ENCODE measurements at regions of chrX and their contacts with region 1.

Region 1: GRCh38 chrX:69222103-69223090 is 57.1 kb upstream of the PJA1 start:
- DNase-seq: peak; percentile 59 to 81 (median 71)
- ATAC-seq: peak; percentile 84
- H3K4me3 ChIP-seq: no peak overlapping the region
- H3K4me3 Mint-ChIP-seq: no peak overlapping the region
- H3K27ac ChIP-seq: no peak overlapping the region
- H3K27ac Mint-ChIP-seq: no peak overlapping the region
- H3K4me1 ChIP-seq: peaks cover 6% of the 10 kb centered on the region
- H3K4me1 Mint-ChIP-seq: no peaks in the 10 kb centered on the region
- H3K27me3 ChIP-seq: no peaks in the 10 kb centered on the region
- H3K27me3 Mint-ChIP-seq: no peaks in the 10 kb centered on the region
- CTCF ChIP-seq: peak; percentile 65

Region 2: GRCh38 chrX:68511255-68511654 is 711.1 kb before region 1 on chrX:
- CTCF ChIA-PET with region 1: no interaction called
- POLR2A ChIA-PET with region 1: no interaction called
- intact Hi-C with region 1: loop called in 1 of 2 experiments (anchors 5 kb)
- DNase-seq: peak in 6 of 14 experiments; percentile 5 to 62 (median 44)
- ATAC-seq: peak; percentile 38
- H3K4me3 ChIP-seq: no peak overlapping the region
- H3K4me3 Mint-ChIP-seq: no peak overlapping the region
- H3K27ac ChIP-seq: no peak overlapping the region
- H3K27ac Mint-ChIP-seq: peak overlapping the region; percentile 4
- H3K4me1 ChIP-seq: peaks cover 9% of the 10 kb centered on the region
- H3K4me1 Mint-ChIP-seq: peaks cover 29% of the 10 kb centered on the region
- H3K27me3 ChIP-seq: no peaks in the 10 kb centered on the region
- H3K27me3 Mint-ChIP-seq: no peaks in the 10 kb centered on the region
- CTCF ChIP-seq: peak; percentile 71

Region 3: GRCh38 chrX:68822641-68823410 is 399.6 kb before region 1 on chrX:
- CTCF ChIA-PET with region 1: interaction called, 12 read pairs
- POLR2A ChIA-PET with region 1: interaction called, 14 read pairs
- intact Hi-C with region 1: loop called (anchors 1 kb)
- DNase-seq: peak in 3 of 14 experiments; percentile 24 to 45 (median 40)
- ATAC-seq: peak; percentile 58
- H3K4me3 ChIP-seq: no peak overlapping the region
- H3K4me3 Mint-ChIP-seq: no peak overlapping the region
- H3K27ac ChIP-seq: no peak overlapping the region
- H3K27ac Mint-ChIP-seq: no peak overlapping the region
- H3K4me1 ChIP-seq: peaks cover under 1% of the 10 kb centered on the region
- H3K4me1 Mint-ChIP-seq: peaks cover 2% of the 10 kb centered on the region
- H3K27me3 ChIP-seq: no peaks in the 10 kb centered on the region
- H3K27me3 Mint-ChIP-seq: no peaks in the 10 kb centered on the region
- CTCF ChIP-seq: no peak

Region 4: DNA sequence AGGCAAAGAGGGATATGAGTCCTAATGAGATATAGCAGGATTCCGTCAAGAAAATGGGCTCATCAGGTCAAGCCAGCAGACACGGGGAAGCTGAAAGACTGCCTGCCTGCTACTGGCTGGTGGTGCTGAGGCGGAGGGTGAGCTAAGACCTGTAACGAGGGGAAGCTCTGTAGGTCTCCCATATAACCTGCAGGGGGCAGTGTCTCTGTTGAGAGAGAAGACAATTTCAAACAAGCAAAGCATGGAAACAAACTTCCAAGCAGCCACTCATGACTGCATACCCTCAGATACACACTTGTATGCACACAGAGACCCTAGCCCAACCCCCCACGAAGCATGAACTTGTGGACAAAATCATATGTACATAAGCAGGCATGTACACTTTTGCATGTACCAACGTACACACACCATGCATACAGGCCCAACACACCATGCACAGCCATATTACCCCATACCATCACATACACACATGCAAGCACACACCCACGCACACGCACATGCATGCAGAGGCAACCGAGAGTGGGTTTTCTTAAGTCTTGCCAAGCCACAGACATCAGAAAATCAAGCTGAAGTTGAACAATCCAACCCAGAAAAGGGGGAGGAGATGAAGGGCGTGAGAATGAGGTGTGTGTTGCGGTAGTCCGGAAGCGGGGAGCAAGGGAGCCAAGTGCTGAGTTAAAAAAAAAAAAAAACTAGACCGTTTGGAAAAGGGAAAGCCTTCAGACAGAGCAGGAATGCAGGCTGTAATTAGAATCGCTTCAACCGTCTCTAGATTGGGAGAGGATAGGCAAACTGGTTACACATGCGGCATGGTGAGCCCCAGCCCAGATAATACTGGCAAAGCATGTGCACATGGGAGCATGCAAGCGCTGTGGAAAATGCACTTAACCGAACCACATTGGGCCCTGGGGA is 128.2 kb before region 1 on chrX:
- CTCF ChIA-PET with region 1: interaction called, 3 read pairs
- POLR2A ChIA-PET with region 1: no interaction called
- intact Hi-C with region 1: loop called (anchors 1 to 2 kb)
- DNase-seq: peak in 8 of 14 experiments; percentile 3 to 48 (median 18)
- ATAC-seq: no peak
- H3K4me3 ChIP-seq: no peak overlapping the region
- H3K4me3 Mint-ChIP-seq: no peak overlapping the region
- H3K27ac ChIP-seq: no peak overlapping the region
- H3K27ac Mint-ChIP-seq: no peak overlapping the region
- H3K4me1 ChIP-seq: no peaks in the 10 kb centered on the region
- H3K4me1 Mint-ChIP-seq: no peaks in the 10 kb centered on the region
- H3K27me3 ChIP-seq: no peaks in the 10 kb centered on the region
- H3K27me3 Mint-ChIP-seq: no peaks in the 10 kb centered on the region
- CTCF ChIP-seq: peak; percentile 36

Region 5: DNA sequence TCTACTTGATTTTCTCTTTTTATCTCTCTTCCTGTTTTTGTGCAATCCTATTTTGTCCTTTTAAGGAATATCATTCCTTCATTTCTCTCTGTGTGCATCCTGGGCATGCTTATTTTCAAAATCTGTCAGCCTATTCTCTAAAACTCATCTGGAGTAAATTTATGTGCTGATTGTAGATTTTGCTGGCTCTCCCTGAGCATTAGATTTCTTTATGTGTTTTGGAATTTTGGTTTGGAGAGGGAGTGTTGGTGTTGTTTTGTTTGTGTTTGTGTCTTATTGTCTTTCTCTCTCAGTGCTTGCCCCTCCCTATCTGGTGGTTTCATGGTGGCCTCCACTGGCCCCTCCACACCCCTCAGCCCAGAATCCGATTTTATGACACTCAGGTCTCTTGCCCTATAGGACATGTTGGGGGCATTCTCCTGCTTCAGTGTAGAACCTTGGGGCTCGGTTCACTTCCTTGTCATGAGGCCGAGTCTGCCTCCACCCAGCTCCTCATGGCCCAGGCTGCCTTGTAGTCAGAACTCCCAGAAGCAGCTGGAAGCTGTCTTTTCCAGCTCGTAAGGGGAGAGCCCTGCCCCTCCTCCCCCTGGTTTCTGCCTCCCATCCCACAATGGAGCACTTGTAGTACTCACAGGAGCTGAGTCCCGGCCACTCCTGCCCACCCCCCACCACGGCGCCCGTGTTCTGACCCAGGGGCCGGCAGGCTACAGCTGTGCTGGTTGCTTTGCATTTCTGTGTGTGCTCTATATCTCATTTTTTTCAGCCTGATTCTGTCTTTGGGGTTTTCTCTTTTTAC is 32.6 kb before region 1 on chrX:
- CTCF ChIA-PET with region 1: no interaction called
- POLR2A ChIA-PET with region 1: no interaction called
- intact Hi-C with region 1: no loop called
- DNase-seq: no peak
- ATAC-seq: no peak
- H3K4me3 ChIP-seq: no peak overlapping the region
- H3K4me3 Mint-ChIP-seq: no peak overlapping the region
- H3K27ac ChIP-seq: no peak overlapping the region
- H3K27ac Mint-ChIP-seq: no peak overlapping the region
- H3K4me1 ChIP-seq: no peaks in the 10 kb centered on the region
- H3K4me1 Mint-ChIP-seq: no peaks in the 10 kb centered on the region
- H3K27me3 ChIP-seq: no peaks in the 10 kb centered on the region
- H3K27me3 Mint-ChIP-seq: no peaks in the 10 kb centered on the region
- CTCF ChIP-seq: no peak

Region 6: DNA sequence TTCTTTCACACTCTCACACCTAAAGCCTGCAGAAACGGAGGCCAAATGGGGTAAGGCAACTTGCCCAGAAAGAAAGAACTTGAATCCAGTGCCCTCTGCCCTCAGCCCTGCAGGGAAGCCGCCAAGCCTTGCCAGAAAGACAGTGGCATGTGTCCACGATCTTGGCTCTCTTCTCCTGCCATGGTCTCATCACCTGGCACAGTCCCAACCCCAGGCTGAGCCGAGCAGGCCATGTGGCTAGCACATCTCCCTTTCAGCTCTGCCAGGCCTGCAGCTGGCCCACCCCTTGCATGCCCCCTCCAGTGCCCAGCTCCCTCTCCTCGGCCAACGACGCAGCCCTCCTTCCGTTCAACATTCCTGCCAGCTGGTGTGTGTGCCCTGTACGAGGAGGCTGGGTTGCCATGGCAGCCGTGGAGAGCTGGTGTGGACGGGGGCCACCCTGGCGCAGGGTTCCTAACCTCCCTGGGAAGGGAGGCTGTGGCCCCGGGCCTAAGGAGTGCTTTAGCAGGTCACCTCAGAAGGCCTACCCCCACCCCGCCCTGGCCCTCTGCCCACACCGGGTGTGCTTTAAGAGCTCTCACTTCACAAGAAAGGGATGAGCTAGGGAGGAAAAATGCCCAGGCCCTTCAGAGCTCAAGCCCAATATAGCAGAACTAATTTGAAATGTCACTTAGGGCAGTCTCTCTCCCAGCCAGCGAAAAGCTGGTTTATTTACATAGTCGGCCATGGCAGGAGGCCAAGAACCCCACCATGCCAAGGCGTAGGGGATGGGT is 15.9 kb after region 1 on chrX:
- CTCF ChIA-PET with region 1: no interaction called
- POLR2A ChIA-PET with region 1: no interaction called
- intact Hi-C with region 1: no loop called
- DNase-seq: no peak
- ATAC-seq: no peak
- H3K4me3 ChIP-seq: no peak overlapping the region
- H3K4me3 Mint-ChIP-seq: no peak overlapping the region
- H3K27ac ChIP-seq: no peak overlapping the region
- H3K27ac Mint-ChIP-seq: no peak overlapping the region
- H3K4me1 ChIP-seq: no peaks in the 10 kb centered on the region
- H3K4me1 Mint-ChIP-seq: no peaks in the 10 kb centered on the region
- H3K27me3 ChIP-seq: no peaks in the 10 kb centered on the region
- H3K27me3 Mint-ChIP-seq: no peaks in the 10 kb centered on the region
- CTCF ChIP-seq: no peak